Mammary epithelial cell (primary cell): ENCODE measurements at regions of chr22 and their contacts with region 1.

Region 1: DNA sequence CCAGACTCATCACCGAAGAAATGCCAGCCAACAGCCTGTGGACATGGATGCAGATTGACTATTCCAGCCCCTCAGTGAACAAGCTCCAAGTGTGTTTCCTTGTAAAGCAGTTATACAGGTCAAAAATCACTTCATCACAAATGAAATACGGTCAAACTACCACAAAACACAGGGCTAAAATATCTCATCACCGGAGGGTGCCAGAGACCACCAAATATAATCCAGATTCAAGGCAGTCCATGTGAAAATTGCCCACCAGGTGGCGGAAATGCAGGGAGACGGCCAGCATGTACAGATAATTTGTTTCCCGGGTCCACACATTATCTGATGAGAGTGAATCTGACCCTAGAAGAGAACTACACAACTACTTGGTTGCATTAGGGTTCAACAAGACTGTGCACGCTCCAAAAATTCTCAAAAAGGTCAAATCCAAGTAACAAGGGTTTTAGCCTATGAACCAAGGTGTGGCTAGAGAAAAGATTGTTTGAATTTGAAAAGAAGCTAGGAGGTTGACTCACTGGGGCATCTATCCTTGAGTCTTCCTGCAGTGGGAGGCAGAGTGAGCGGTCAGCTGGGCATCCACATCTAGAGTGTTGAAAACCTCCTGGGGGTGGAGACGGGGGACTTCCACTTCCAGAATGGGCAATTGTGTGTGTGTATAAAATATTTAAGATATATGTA is 71.7 kb downstream of the IGLL5 start:
- DNase-seq: peak; percentile 48
- H3K4me3 ChIP-seq: no peak overlapping the region
- H3K27ac ChIP-seq: no peak overlapping the region
- H3K4me1 ChIP-seq: no peaks in the 10 kb centered on the region
- H3K27me3 ChIP-seq: no peaks in the 10 kb centered on the region
- CTCF ChIP-seq: peak; percentile 67 to 81

Region 2: DNA sequence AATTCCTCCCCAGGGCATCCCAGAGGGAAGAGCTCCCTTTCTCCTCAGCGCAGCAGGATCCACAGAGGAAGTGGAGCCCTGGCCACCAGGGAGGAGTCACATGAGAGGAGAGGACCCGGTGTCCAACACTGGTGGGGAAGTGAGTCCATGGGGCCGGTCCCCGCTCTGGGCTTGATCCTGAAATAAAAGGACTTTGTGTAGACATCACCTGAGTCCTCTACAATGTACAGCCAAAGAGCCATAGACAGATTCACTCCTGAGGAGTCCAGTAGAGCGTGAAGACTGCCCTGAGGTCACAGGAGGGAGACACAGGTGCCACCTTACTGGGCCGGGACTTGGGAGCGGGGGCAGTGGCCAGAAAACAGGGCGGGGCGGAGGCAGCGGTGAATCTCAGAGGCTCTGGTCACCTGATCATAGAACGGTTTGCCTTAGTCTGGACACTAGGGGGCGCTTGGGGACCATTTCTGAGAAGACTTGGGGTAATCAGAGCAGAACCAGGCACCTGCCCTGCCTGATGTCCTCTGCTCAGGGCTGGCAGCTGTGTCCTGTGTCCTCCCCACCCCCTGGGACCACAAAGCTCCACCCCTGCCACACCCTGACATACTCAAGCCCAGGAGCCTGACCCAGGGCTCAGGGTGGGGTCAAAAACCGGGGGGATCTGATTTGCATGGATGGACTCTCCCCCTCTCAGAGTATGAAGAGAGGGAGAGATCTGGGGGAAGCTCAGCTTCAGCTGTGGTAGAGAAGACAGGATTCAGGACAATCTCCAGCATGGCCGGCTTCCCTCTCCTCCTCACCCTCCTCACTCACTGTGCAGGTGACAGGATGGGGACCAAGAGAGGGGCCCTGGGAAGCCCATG is 602.0 kb before region 1 on chr22:
- CTCF ChIA-PET with region 1: no interaction called
- dilution Hi-C with region 1: no loop called
- in situ Hi-C with region 1: no loop called
- intact Hi-C with region 1: loop called (anchors 1 kb)
- DNase-seq: peak; percentile 55
- H3K4me3 ChIP-seq: no peak overlapping the region
- H3K27ac ChIP-seq: no peak overlapping the region
- H3K4me1 ChIP-seq: no peaks in the 10 kb centered on the region
- H3K27me3 ChIP-seq: no peaks in the 10 kb centered on the region
- CTCF ChIP-seq: peak; percentile 66 to 84

Region 3: GRCh38 chr22:22587577-22588188 is 371.6 kb before region 1 on chr22:
- CTCF ChIA-PET with region 1: no interaction called
- dilution Hi-C with region 1: no loop called
- in situ Hi-C with region 1: no loop called
- intact Hi-C with region 1: loop called (anchors 1 kb)
- DNase-seq: no peak
- H3K4me3 ChIP-seq: no peak overlapping the region
- H3K27ac ChIP-seq: no peak overlapping the region
- H3K4me1 ChIP-seq: no peaks in the 10 kb centered on the region
- H3K27me3 ChIP-seq: no peaks in the 10 kb centered on the region
- CTCF ChIP-seq: no peak

Region 4: GRCh38 chr22:22770280-22770871 is 188.9 kb before region 1 on chr22:
- CTCF ChIA-PET with region 1: interaction called, 3 read pairs
- dilution Hi-C with region 1: no loop called
- in situ Hi-C with region 1: no loop called
- intact Hi-C with region 1: loop called (anchors 1 kb)
- DNase-seq: peak; percentile 10
- H3K4me3 ChIP-seq: no peak overlapping the region
- H3K27ac ChIP-seq: no peak overlapping the region
- H3K4me1 ChIP-seq: no peaks in the 10 kb centered on the region
- H3K27me3 ChIP-seq: no peaks in the 10 kb centered on the region
- CTCF ChIP-seq: peak; percentile 68 to 85

Region 5: GRCh38 chr22:23029521-23030228 is 70.4 kb after region 1 on chr22:
- CTCF ChIA-PET with region 1: interaction called, 12 read pairs
- dilution Hi-C with region 1: no loop called
- in situ Hi-C with region 1: no loop called
- intact Hi-C with region 1: no loop called
- DNase-seq: no peak
- H3K4me3 ChIP-seq: no peak overlapping the region
- H3K27ac ChIP-seq: no peak overlapping the region
- H3K4me1 ChIP-seq: no peaks in the 10 kb centered on the region
- H3K27me3 ChIP-seq: no peaks in the 10 kb centered on the region
- CTCF ChIP-seq: no peak

Region 6: DNA sequence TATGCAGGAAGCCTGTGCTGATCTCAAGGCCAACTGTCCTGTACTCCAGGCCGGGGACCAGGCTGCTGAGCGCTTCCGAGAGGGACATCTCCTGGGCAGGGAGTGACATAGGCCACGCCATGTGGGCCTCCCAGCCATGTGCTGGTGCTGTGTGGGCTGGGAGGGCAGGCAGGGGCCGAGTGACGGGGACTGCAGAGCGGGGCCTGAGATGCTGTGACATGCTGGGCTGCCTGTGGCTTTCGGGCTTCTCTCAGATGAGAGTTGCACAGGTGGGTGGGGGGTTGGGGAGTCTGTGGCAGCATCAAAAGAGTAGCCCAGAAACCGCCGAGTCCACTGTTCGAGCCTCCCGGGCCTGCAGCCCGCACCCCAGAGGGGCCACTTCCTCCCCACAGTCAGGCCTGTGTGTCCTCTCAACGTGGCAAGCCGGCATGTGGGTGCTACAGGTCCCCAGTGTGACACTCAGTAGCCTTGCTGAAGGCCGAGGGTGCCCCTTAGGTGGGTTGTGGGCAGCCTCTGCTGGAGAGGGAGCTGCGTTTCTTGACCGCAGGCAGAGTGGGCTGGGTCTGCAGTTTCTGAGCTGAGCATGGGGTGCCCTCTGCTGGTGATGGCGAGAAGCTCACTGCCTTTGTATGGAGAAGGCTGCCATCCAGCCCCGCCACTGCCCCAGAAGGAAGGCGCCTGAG is 322.3 kb after region 1 on chr22:
- CTCF ChIA-PET with region 1: no interaction called
- dilution Hi-C with region 1: no loop called
- in situ Hi-C with region 1: no loop called
- intact Hi-C with region 1: loop called (anchors 2 kb)
- DNase-seq: peak; percentile 81
- H3K4me3 ChIP-seq: peak overlapping the region in 2 of 3 experiments; percentile 15 to 26
- H3K27ac ChIP-seq: peak overlapping the region; percentile 73
- H3K4me1 ChIP-seq: peaks cover 62% of the 10 kb centered on the region
- H3K27me3 ChIP-seq: no peaks in the 10 kb centered on the region
- CTCF ChIP-seq: peak; percentile 90 to 94